HepG2 (cell line): ENCODE measurements at regions of chr6 and their contacts with region 1.

Region 1: GRCh38 chr6:5471044-5471443 is 209.7 kb downstream of the FARS2 start:
- DNase-seq: peak; percentile 54
- ATAC-seq: peak; percentile 98
- H3K4me3 ChIP-seq: no peak overlapping the region
- H3K27ac ChIP-seq: no peak overlapping the region
- H3K4me1 ChIP-seq: no peaks in the 10 kb centered on the region
- H3K27me3 ChIP-seq: no peaks in the 10 kb centered on the region
- CTCF ChIP-seq: peak; percentile 86
- EP300 ChIP-seq: no peak
- POLR2A ChIP-seq: no peak
- RAD21 ChIP-seq: peak; percentile 81

Region 2: DNA sequence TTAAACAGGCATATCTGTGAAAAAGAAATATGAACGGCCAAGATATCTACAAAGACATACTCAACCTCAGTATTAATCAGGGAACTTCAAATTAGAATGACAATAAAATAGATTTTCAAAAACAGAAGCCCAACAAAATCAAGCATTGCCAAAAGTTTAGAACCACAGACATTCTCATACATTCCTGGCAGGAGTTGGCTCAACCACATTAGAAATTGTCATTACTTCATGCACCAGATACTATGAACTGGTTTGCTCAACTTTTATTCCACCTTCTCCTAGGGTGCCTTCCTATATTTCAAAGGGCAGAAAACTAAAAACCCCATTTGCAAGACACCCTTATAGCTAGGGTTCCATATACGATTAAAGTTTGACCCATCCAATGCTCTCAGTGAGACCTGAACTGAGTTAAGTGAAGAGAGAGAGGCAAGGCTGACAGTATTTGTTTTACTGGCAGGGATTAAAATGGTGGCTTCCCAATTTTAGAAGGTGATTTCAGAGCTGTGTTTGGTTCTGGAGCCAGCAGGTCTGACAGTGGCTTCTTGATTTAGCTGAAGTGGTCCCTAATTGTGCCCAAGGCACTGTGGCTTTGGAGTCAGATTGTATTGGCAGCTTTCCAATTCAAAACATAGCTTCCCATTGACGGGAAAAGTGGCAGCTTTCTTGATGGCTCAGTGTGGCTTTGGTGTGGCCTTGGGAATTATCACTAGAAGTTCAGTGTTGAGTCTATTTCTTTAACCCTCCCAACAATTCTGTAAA is 772.0 kb before region 1 on chr6:
- CTCF ChIA-PET with region 1: no interaction called
- POLR2A ChIA-PET with region 1: no interaction called
- in situ Hi-C with region 1: no loop called
- intact Hi-C with region 1: no loop called
- DNase-seq: no peak
- ATAC-seq: no peak
- H3K4me3 ChIP-seq: no peak overlapping the region
- H3K27ac ChIP-seq: no peak overlapping the region
- H3K4me1 ChIP-seq: no peaks in the 10 kb centered on the region
- H3K27me3 ChIP-seq: peaks cover 0 to 7% of the 10 kb centered on the region in 2 experiments; a peak in 2 of 5 replicates
- CTCF ChIP-seq: no peak
- EP300 ChIP-seq: no peak
- POLR2A ChIP-seq: no peak
- RAD21 ChIP-seq: no peak

Region 3: DNA sequence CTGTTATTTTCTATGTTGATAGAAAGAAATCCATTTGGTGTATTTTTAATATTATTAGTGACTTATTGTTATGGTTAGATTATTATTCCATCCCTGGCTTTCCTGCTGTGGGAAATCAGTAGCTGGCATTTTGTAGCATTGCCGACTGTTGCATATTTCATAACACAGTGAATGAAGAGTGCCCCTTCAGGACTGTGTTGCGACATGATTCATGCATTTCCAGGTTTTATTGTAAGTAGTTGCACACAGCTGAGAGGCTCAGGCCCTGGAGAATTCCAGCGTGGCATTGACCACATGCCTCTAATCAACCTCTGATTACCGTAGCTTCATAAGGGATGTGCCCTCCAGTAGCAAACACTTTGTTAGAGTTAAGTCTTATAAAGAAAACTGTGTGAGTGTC is 54.2 kb after region 1 on chr6:
- CTCF ChIA-PET with region 1: no interaction called
- POLR2A ChIA-PET with region 1: no interaction called
- in situ Hi-C with region 1: no loop called
- intact Hi-C with region 1: no loop called
- DNase-seq: no peak
- ATAC-seq: no peak
- H3K4me3 ChIP-seq: no peak overlapping the region
- H3K27ac ChIP-seq: no peak overlapping the region
- H3K4me1 ChIP-seq: no peaks in the 10 kb centered on the region
- H3K27me3 ChIP-seq: no peaks in the 10 kb centered on the region
- CTCF ChIP-seq: no peak
- EP300 ChIP-seq: no peak
- POLR2A ChIP-seq: no peak
- RAD21 ChIP-seq: no peak

Region 4: DNA sequence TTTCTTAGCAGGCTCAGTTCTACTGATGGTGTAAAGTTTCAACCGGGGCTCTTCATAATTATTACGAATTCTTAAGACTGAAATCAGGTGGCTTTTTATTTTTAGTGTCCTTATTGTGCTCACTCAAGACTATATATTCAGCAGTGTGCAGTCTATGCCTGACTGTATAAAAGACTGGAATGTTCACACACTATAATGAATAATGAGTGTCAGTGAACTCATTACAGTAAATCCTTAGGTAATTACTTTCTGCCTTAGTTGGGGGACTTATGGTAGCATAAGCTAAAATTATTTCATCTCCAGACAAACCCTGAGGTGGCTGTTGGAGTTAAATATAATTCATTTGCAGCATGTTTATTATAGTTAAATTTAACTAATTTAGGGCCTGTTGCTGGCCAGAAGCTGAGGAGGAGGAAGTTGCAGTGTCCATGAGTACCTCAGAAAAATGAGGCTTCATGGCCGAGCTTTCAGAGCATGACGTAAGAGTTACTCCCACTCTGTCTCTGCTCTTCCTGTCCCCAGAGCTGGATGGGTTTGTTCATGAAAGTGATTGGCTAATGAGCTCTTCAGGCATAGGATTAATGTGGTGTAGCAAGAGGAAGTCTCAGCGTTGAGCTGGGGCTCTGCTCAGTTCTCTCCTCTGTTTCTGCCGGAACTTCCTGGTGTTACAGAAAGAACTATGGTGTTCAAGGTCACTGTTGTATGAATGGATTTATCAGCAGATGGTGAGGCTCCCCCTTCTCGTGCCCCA is 199.9 kb after region 1 on chr6:
- CTCF ChIA-PET with region 1: no interaction called
- POLR2A ChIA-PET with region 1: no interaction called
- in situ Hi-C with region 1: no loop called
- intact Hi-C with region 1: no loop called
- DNase-seq: peak; percentile 28
- ATAC-seq: peak; percentile 61
- H3K4me3 ChIP-seq: no peak overlapping the region
- H3K27ac ChIP-seq: no peak overlapping the region
- H3K4me1 ChIP-seq: no peaks in the 10 kb centered on the region
- H3K27me3 ChIP-seq: no peaks in the 10 kb centered on the region
- CTCF ChIP-seq: no peak
- EP300 ChIP-seq: no peak
- POLR2A ChIP-seq: no peak
- RAD21 ChIP-seq: no peak

Region 5: DNA sequence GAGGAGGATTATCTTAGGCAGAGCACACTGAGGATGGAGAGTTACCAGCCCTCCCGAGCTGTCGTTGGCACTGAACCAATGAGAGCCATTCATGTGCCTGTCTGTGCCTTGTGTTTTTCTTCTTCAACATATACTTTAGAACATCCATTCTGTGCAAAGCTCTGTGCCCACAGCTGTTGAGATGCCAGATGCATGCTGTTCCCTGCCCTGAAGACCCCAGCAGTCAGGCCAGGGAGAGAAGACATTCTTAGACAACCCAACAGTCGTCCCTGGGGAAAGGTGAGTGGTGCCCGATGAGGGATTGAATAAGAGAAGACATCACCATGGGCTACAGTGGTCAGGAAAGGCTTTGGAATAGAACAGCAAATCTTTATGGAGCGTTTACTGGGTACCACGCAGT is 421.6 kb after region 1 on chr6:
- CTCF ChIA-PET with region 1: no interaction called
- POLR2A ChIA-PET with region 1: interaction called, 3 read pairs
- in situ Hi-C with region 1: no loop called
- intact Hi-C with region 1: loop called (anchors 5 kb)
- DNase-seq: no peak
- ATAC-seq: peak; percentile 12; the same call in 2 of the 3 replicates
- H3K4me3 ChIP-seq: peak overlapping the region; percentile 18 to 56 (median 49); a peak in 5 of 6 replicates
- H3K27ac ChIP-seq: peak overlapping the region; percentile 27
- H3K4me1 ChIP-seq: peaks cover 9% of the 10 kb centered on the region
- H3K27me3 ChIP-seq: no peaks in the 10 kb centered on the region; a peak in 1 of 5 replicates
- CTCF ChIP-seq: no peak
- EP300 ChIP-seq: no peak
- POLR2A ChIP-seq: no peak
- RAD21 ChIP-seq: no peak

Region 6: GRCh38 chr6:6221787-6222535 is 750.9 kb after region 1 on chr6:
- CTCF ChIA-PET with region 1: no interaction called
- POLR2A ChIA-PET with region 1: no interaction called
- in situ Hi-C with region 1: no loop called
- intact Hi-C with region 1: loop called (anchors 10 kb)
- DNase-seq: peak; percentile 41
- ATAC-seq: peak; percentile 64
- H3K4me3 ChIP-seq: no peak overlapping the region
- H3K27ac ChIP-seq: no peak overlapping the region
- H3K4me1 ChIP-seq: no peaks in the 10 kb centered on the region
- H3K27me3 ChIP-seq: no peaks in the 10 kb centered on the region
- CTCF ChIP-seq: peak; percentile 42
- EP300 ChIP-seq: no peak
- POLR2A ChIP-seq: no peak
- RAD21 ChIP-seq: no peak